ENCODE measurements at regions of chr9 and their contacts with region 1.

Region 1: GRCh38 chr9:72280913-72281500 is 84.0 kb downstream of the ZFAND5 start:
- DNase-seq: peak; percentile 14
- H3K4me3 ChIP-seq: no peak overlapping the region
- H3K27me3 ChIP-seq: peaks cover 2% of the 10 kb centered on the region; the same call in 1 of the 2 replicates
- CTCF ChIP-seq: peak; percentile 95

Region 2: GRCh38 chr9:72168076-72168475 is 112.9 kb before region 1 on chr9:
- CTCF ChIA-PET with region 1: no interaction called
- POLR2A ChIA-PET with region 1: no interaction called
- DNase-seq: no peak
- H3K4me3 ChIP-seq: no peak overlapping the region
- H3K27me3 ChIP-seq: no peaks in the 10 kb centered on the region
- CTCF ChIP-seq: no peak

Region 3: DNA sequence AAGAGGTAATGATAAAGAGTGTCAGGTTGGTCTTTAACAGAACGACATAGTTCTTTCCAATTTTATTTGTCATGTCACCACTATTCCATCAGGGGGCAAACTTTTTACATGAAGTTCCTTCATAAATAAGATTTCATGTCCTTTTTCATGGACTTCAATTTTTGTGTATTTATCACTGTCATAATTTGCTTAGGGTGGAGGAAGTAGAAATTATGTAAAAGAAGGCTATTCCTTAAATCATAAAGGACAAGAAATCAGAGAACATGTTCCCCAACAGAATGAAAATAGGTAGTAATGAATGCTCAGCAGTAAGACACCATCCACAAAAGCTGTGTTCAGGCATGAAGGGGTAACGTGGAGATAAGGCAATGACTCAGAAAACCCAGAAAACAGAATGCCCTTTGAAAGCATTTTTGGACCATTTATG is 11.3 kb after region 1 on chr9:
- CTCF ChIA-PET with region 1: interaction called, 60 read pairs
- POLR2A ChIA-PET with region 1: no interaction called
- DNase-seq: no peak
- H3K4me3 ChIP-seq: no peak overlapping the region
- H3K27me3 ChIP-seq: peaks cover 3% of the 10 kb centered on the region; the same call in 1 of the 2 replicates
- CTCF ChIP-seq: peak; percentile 50

Region 4: DNA sequence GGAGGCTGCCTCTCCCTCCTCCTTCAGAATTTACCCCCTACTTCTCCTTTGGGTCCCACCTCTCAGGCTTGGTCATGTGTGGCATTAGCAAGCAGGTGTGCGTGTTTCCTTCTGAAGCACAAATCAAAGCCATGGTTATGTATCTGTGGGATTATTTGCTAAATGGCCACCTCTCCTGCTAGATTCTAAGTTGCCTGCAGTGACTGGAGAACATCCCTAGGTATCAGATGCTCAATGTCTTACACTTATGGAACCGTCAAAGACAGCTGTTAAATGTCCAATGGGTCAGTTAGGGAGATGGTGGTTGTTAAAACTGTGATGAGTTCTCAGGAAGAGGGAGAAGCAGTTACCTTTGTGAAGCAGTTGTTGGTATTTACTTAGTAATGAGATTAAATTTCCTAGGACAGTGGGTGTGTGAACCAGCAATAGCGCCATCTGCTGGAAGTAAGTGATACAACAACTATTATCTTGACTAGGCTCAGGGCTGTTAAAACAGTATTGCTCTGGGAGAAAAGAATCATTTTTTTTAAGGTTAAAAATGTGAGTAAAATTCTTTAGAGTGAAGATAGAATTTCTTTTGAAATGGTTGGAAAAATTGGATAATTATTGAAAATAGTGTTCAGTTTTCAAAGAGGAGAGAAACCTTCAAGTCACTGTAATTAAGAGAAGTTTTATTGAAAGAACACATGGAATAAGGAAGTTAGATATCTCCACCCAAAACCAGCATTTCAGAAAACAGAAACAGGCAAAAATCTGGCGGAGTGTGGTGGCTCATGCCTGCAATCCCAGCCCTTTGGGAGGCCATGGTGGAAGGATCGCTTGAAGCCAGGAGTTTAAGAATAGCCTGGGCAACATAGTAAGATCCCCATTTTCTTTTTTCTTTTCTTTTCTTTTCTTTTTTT is 311.7 kb after region 1 on chr9:
- CTCF ChIA-PET with region 1: interaction called, 12 read pairs
- POLR2A ChIA-PET with region 1: no interaction called
- DNase-seq: no peak
- H3K4me3 ChIP-seq: no peak overlapping the region
- H3K27me3 ChIP-seq: no peaks in the 10 kb centered on the region
- CTCF ChIP-seq: peak; percentile 68

Region 5: GRCh38 chr9:72753266-72753893 is 472.4 kb after region 1 on chr9:
- CTCF ChIA-PET with region 1: interaction called, 39 read pairs
- POLR2A ChIA-PET with region 1: no interaction called
- DNase-seq: no peak
- H3K4me3 ChIP-seq: no peak overlapping the region
- H3K27me3 ChIP-seq: no peaks in the 10 kb centered on the region
- CTCF ChIP-seq: peak; percentile 46